Activated CD8-positive, alpha-beta memory T cell treated with anti-CD3 and anti-CD28 coated beads, Interleukin-2, amount 10 ng/mL, durations not matched to agents 7 days and 5 days (primary cell): ENCODE measurements at regions of chr3 and their contacts with region 1.

Region 1: GRCh38 chr3:172106989-172107388 is 67.6 kb downstream of the FNDC3B start:
- DNase-seq: peak; percentile 88
- ATAC-seq: peak; percentile 61
- H3K4me3 Mint-ChIP-seq: peak overlapping the region; percentile 67
- H3K27ac Mint-ChIP-seq: peak overlapping the region; percentile 90
- H3K4me1 Mint-ChIP-seq: peaks cover 68% of the 10 kb centered on the region
- H3K27me3 Mint-ChIP-seq: peaks cover 7% of the 10 kb centered on the region

Region 2: DNA sequence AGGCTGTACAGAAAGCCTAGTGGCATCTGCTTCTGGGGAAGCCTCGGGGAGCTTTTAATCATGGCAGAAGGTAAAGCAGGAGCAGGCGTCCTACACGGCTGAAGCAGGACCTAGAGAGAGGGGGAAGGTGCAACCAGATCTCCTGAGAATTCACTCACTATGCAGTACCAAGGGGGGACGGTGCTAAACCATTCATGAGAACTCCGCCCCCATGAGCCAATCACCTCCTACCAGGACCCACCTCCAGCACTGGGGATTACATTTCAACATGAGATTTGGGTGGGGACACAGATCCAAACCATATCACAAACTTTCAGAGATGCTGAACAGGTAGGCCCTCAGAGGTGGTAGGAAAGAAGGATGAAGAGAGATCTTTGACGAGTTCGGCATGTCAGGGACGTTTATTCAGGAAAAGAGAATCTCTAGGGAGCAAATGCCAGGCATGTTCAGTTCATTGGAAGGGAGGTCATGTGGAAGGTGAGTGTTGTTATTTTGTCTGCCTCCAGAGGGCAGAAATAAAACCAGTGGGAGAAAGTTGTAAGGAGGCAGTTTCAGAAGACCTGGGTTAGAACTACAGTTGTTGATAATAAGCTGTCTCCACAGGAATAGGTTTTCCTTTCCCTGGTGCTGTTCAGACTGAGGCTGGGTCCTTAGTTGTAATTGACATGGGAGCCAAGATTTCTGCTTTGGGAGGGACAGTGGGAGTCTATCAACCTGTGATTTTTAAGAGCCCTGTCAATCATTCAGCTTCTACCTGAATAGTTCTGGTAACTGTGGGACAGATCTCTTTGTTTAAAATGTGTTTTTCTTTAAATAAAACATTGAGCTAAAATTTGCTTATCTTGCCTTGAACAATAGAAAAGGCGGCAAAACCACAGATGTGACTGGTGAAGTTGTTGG is 72.0 kb before region 1 on chr3:
- CTCF ChIA-PET with region 1: interaction called, 12 read pairs
- DNase-seq: no peak
- ATAC-seq: no peak
- H3K4me3 Mint-ChIP-seq: no peak overlapping the region
- H3K27ac Mint-ChIP-seq: no peak overlapping the region
- H3K4me1 Mint-ChIP-seq: peaks cover 24% of the 10 kb centered on the region
- H3K27me3 Mint-ChIP-seq: no peaks in the 10 kb centered on the region

Region 3: GRCh38 chr3:172129870-172130683 is 23.1 kb after region 1 on chr3:
- CTCF ChIA-PET with region 1: interaction called, 14 read pairs
- DNase-seq: peak; percentile 73
- ATAC-seq: peak; percentile 59
- H3K4me3 Mint-ChIP-seq: peak overlapping the region; percentile 17
- H3K27ac Mint-ChIP-seq: peak overlapping the region; percentile 79
- H3K4me1 Mint-ChIP-seq: peaks cover 54% of the 10 kb centered on the region
- H3K27me3 Mint-ChIP-seq: no peaks in the 10 kb centered on the region

Region 4: GRCh38 chr3:172138795-172139441 is 31.9 kb after region 1 on chr3:
- CTCF ChIA-PET with region 1: interaction called, 11 read pairs
- DNase-seq: peak; percentile 70
- ATAC-seq: peak; percentile 69
- H3K4me3 Mint-ChIP-seq: peak overlapping the region; percentile 48
- H3K27ac Mint-ChIP-seq: peak overlapping the region; percentile 89
- H3K4me1 Mint-ChIP-seq: peaks cover 78% of the 10 kb centered on the region
- H3K27me3 Mint-ChIP-seq: no peaks in the 10 kb centered on the region

Region 5: GRCh38 chr3:172580680-172581401 is 473.9 kb after region 1 on chr3:
- CTCF ChIA-PET with region 1: no interaction called
- DNase-seq: no peak
- ATAC-seq: peak; percentile 44
- H3K4me3 Mint-ChIP-seq: peak overlapping the region; percentile 56
- H3K27ac Mint-ChIP-seq: peak overlapping the region; percentile 85
- H3K4me1 Mint-ChIP-seq: peaks cover 91% of the 10 kb centered on the region
- H3K27me3 Mint-ChIP-seq: no peaks in the 10 kb centered on the region

Region 6: GRCh38 chr3:172666873-172667694 is 560.1 kb after region 1 on chr3:
- CTCF ChIA-PET with region 1: no interaction called
- DNase-seq: peak; percentile 88
- ATAC-seq: peak; percentile 100
- H3K4me3 Mint-ChIP-seq: no peak overlapping the region
- H3K27ac Mint-ChIP-seq: no peak overlapping the region
- H3K4me1 Mint-ChIP-seq: peaks cover 18% of the 10 kb centered on the region
- H3K27me3 Mint-ChIP-seq: no peaks in the 10 kb centered on the region